Right ventricle myocardium inferior (tissue), 1 donor: ENCODE measurements at regions of chr7 and their contacts with region 1.

Region 1: DNA sequence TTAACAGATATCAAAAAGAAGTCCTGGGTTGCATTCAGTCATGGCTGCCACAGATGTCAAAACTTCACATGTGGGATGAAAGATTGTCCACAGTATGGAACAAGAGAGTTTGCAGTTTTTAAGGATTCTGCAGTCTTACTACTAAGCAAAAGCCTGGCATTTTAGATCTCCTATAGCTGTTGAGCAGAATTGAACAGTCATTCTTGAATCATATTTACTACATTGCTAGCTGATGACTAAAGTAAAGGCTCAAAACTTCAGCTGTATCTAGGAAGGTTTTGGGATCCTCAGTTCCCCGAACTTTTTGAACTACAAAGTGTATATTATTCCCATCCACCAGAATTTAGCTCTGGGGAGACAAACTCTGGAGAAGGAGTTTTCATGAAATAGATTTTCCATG is 31.0 kb downstream of the BET1 start:
- DNase-seq: no peak
- ATAC-seq: no peak

Region 2: DNA sequence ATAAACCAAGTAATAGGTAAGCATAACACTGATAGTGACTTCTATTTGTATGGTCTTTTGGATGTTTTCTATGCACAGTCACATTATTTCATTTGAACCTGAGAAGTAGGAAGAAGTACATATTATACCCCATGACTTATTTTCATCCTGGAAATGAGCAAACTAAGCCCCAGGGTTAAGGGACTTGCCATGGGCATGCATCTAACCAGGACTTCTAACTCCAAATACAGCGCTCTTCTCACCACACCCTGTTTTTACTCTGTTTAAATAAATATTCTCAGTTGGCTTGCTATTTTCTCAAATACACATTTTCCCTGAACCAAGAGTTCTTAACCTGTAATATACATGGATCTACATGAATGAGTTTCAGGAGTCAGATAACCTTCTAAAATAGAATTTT is 35.3 kb before region 1 on chr7:
- intact Hi-C with region 1: loop called (anchors 2 kb)
- DNase-seq: no peak
- ATAC-seq: no peak